CD14-positive monocyte (primary cell): ENCODE measurements at regions of chr4 and their contacts with region 1.

Region 1: DNA sequence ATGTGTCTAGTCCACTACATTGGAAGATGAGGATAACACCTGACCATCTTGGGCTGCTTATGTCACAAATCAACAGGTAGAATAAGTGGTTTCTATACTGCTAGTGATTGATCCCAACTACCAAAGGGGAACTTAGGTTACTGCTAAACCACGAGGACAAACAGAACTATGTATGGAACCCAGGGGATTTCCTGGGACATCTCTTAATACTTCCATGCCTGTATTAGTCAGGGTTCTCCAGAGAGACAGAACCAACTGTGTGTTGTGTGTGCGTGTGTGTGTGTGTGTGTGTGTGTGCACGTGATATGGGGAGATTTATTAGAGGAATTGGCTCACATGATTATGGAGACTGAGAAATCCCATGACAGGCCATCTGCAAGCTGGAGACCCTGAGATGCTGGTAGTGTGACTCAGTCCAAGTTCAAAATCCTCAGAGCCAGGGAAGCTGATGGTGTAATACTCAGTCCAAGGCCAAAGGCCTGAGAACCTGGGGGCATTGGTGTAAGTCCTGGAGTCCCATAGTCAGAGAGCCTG is 16.2 kb upstream of the AFF1 start:
- DNase-seq: peak; percentile 44 to 93 (median 63)
- H3K4me3 ChIP-seq: no peak overlapping the region
- H3K4me3 Mint-ChIP-seq: no peak overlapping the region
- H3K27ac ChIP-seq: peak overlapping the region in 1 of 2 donors; percentile 36
- H3K27ac Mint-ChIP-seq: peak overlapping the region in 4 of 7 donors; percentile 20 to 80 (median 46)
- H3K4me1 ChIP-seq: peaks cover 35 to 53% of the 10 kb centered on the region in 2 donors
- H3K4me1 Mint-ChIP-seq: peaks cover 53% of the 10 kb centered on the region
- H3K27me3 ChIP-seq: no peaks in the 10 kb centered on the region
- H3K27me3 Mint-ChIP-seq: no peaks in the 10 kb centered on the region
- CTCF ChIP-seq: no peak

Region 2: DNA sequence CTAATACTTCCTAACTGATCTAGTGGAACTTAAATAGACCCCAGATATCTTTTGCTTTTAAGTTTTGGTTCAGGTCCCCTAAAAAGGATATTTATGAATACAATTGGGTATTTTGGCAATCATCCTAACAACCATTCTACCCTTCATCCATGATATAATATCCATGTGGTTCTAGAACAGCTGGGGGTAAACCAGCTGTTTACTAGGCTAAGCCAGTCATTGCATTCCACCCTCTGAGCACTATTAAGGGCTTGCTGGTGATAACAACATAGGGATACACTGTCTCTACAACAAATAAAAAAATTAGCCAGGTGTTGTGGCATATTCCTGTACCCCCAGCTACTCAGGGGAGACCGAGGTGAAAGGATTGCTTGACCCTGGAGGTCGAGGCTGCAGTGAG is 503.9 kb before region 1 on chr4:
- intact Hi-C with region 1: no loop called
- DNase-seq: no peak
- H3K4me3 ChIP-seq: no peak overlapping the region
- H3K4me3 Mint-ChIP-seq: no peak overlapping the region
- H3K27ac ChIP-seq: no peak overlapping the region
- H3K27ac Mint-ChIP-seq: no peak overlapping the region
- H3K4me1 ChIP-seq: no peaks in the 10 kb centered on the region
- H3K4me1 Mint-ChIP-seq: peaks cover 2% of the 10 kb centered on the region
- H3K27me3 ChIP-seq: no peaks in the 10 kb centered on the region
- H3K27me3 Mint-ChIP-seq: no peaks in the 10 kb centered on the region
- CTCF ChIP-seq: no peak

Region 3: DNA sequence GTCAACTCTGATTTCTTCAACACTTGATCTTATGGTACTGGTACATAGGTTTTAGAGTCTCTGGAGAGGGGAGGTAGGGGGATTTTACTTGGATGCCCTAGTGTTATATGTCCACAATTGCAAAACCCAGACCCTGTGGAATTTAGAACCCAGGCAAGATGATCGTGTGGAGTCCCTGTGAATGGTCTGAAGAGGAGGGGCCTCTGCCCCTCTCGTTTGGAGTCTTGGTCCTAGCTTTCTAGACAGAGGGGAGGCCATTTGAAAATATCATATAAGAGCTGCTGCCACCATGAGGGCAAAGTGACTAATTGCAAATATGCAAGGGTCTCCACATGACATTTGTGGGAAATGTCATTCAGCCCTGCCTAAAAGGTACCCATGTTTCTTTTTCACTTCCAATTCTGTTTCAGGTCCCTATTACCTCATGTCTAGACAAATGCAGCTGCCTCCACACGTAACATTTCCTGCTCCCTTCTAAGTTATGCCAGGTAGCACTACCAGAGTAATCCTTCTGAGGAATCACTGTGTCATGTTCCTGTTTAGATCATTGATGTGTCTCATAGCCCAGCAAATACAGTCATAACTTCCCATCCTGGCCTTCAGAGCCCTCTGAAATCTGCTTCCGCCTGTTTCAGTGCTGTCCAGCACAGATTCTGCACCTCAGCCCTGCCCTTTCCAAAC is 175.0 kb after region 1 on chr4:
- intact Hi-C with region 1: loop called (anchors 2 to 5 kb)
- DNase-seq: peak; percentile 18 to 45 (median 44)
- H3K4me3 ChIP-seq: no peak overlapping the region
- H3K4me3 Mint-ChIP-seq: no peak overlapping the region
- H3K27ac ChIP-seq: peak overlapping the region in 1 of 2 donors; percentile 42
- H3K27ac Mint-ChIP-seq: peak overlapping the region; percentile 20 to 84 (median 77)
- H3K4me1 ChIP-seq: peaks cover 7 to 19% of the 10 kb centered on the region in 2 donors
- H3K4me1 Mint-ChIP-seq: peaks cover 21% of the 10 kb centered on the region
- H3K27me3 ChIP-seq: no peaks in the 10 kb centered on the region
- H3K27me3 Mint-ChIP-seq: no peaks in the 10 kb centered on the region
- CTCF ChIP-seq: peak; percentile 80

Region 4: GRCh38 chr4:87220094-87220822 is 301.7 kb after region 1 on chr4 and contains the start of gene KLHL8:
- intact Hi-C with region 1: loop called in 1 of 2 experiments (anchors 10 kb)
- DNase-seq: peak; percentile 76 to 82 (median 80)
- H3K4me3 ChIP-seq: peak within 1 kb of the TSS; percentile 90 to 100 (median 100)
- H3K4me3 Mint-ChIP-seq: peak within 1 kb of the TSS; percentile 83 to 98
- H3K27ac ChIP-seq: peak within 1 kb of the TSS; percentile 92 to 94
- H3K27ac Mint-ChIP-seq: peak within 1 kb of the TSS; percentile 81 to 96 (median 91)
- H3K4me1 ChIP-seq: peaks cover 12 to 36% of the 10 kb centered on the region in 2 donors
- H3K4me1 Mint-ChIP-seq: peaks cover 36% of the 10 kb centered on the region
- H3K27me3 ChIP-seq: no peaks in the 10 kb centered on the region
- H3K27me3 Mint-ChIP-seq: peaks cover 2% of the 10 kb centered on the region in 3 donors
- CTCF ChIP-seq: no peak
- polyA plus RNA-seq, gene KLHL8: 7.5 to 28.6 (median 23.7) TPM